GM12878 (cell line): ENCODE measurements at regions of chr11 and their contacts with region 1.

Region 1: GRCh38 chr11:46529095-46529905 is 64.5 kb downstream of the AMBRA1 start:
- DNase-seq: no peak
- ATAC-seq: peak; percentile 98
- H3K4me3 ChIP-seq: no peak overlapping the region
- H3K27ac ChIP-seq: 0 out of 2 replicates have a peak overlapping the region, but pooled peaks have one; percentile 4
- H3K4me1 ChIP-seq: no peaks in the 10 kb centered on the region; the same call in 1 of the 2 replicates
- H3K27me3 ChIP-seq: no peaks in the 10 kb centered on the region
- CTCF ChIP-seq: peak; percentile 88 to 94 (median 93); a peak in 5 of 6 replicates
- EP300 ChIP-seq: no peak
- POLR2A ChIP-seq: no peak
- RAD21 ChIP-seq: peak; percentile 70

Region 2: DNA sequence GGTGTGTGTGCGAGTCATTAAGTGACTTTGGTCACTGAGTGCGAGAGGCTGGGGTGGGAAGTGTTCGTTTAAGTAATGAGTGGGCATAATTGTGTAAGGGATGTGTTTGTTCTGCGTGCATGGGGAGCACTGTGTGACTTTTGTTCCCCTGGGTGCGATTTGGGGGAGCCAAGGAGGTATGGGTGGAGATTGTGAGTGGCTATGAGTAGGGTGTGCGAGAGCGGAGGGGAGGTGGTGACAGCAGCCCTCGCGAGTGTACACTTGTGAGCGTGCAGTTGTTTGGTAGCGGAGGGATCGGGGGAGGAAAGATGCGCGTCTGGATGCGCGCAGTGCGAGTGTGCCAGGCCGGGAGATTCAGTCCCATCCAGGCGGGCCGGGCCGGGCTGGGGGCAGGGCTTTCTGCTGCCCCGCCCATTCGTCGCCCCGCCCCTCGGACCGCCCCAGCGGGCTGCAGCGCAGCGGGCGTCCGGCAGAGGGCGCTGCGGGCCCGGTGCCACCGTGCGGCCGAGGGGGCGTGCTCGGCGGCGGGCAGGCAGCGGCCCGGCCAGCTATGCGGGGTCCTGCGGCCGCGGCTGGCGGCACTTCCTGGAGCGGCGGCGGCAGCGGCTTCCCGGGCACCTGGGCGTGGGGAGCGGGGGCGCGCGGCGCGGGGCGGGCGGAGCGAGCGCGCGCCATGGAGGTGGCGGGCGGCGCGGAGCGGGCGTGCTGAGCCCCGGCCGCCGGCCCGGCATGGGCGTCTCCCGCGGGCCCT is 182.2 kb before region 1 on chr11 and contains the start of gene DGKZ:
- CTCF ChIA-PET with region 1: interaction called, 15 read pairs
- POLR2A ChIA-PET with region 1: no interaction called
- RAD21 ChIA-PET with region 1: interaction called, 3 read pairs
- SMC1A ChIA-PET with region 1: no interaction called
- in situ Hi-C with region 1: no loop called
- intact Hi-C with region 1: no loop called
- DNase-seq: no peak
- ATAC-seq: peak; percentile 69
- H3K4me3 ChIP-seq: peak within 1 kb of the TSS; percentile 88
- H3K27ac ChIP-seq: peak within 1 kb of the TSS; percentile 71
- H3K4me1 ChIP-seq: peaks cover 39% of the 10 kb centered on the region
- H3K27me3 ChIP-seq: no peaks in the 10 kb centered on the region
- CTCF ChIP-seq: peak; percentile 63 to 92 (median 64); a peak in 4 of 6 replicates
- EP300 ChIP-seq: no peak
- POLR2A ChIP-seq: no peak; the same call in 1 of the 2 replicates
- RAD21 ChIP-seq: peak; percentile 64
- polyA plus RNA-seq, gene DGKZ: 0.50 to 1.6 TPM

Region 3: DNA sequence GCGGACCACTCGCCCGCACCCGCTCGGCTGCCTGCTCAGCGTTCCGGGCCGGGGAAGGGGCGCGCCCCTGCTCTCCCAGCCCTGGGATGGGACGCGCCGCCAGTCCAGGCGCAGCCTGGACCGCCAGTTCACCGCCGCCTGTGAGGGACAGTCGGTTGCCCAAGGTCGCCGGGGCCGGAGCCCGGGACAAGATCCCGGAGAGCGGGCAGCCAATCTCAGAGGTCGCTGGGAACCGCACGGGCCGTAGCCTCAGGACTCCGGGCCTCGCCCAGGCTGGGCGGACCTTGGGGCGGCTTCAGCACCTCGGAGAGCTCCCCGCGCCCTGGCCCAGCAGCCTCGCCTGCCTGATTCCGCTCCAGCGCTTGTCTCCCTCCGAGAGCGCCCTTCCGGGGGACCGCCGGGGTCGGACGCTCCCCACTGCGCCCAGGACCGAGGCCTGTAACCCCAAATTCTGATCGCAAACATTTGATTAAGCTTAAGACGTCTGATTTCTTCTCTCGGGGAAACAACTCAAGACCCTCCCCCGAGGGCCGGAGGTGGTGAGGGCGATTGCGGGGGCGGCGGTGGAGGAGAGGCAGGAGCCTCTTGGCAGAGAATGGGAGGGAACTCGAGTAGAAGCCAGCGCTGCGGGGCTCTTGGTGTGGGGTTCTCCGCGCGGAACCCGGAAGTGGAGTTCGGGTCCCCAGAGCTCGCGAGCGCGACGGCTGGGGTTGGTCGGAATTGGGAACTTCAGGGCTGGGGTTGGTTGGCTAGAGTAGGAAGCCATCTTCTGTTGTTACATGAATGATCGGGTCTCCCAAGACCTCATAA is 136.7 kb before region 1 on chr11:
- CTCF ChIA-PET with region 1: interaction called, 94 read pairs
- POLR2A ChIA-PET with region 1: interaction called, 3 read pairs
- RAD21 ChIA-PET with region 1: interaction called, 16 read pairs
- SMC1A ChIA-PET with region 1: interaction called, 21 read pairs
- in situ Hi-C with region 1: loop called (anchors 10 kb)
- intact Hi-C with region 1: loop called (anchors 1 kb)
- DNase-seq: no peak
- ATAC-seq: peak; percentile 85
- H3K4me3 ChIP-seq: peak overlapping the region; percentile 57; the same call in 1 of the 2 replicates
- H3K27ac ChIP-seq: no peak overlapping the region
- H3K4me1 ChIP-seq: peaks cover 6% of the 10 kb centered on the region
- H3K27me3 ChIP-seq: peaks cover 12 to 13% of the 10 kb centered on the region in 2 experiments
- CTCF ChIP-seq: no peak
- EP300 ChIP-seq: no peak
- POLR2A ChIP-seq: no peak
- RAD21 ChIP-seq: no peak

Region 4: GRCh38 chr11:46438211-46438610 is 91.1 kb before region 1 on chr11:
- CTCF ChIA-PET with region 1: interaction called, 13 read pairs
- POLR2A ChIA-PET with region 1: no interaction called
- RAD21 ChIA-PET with region 1: interaction called, 4 read pairs
- SMC1A ChIA-PET with region 1: interaction called, 9 read pairs
- in situ Hi-C with region 1: no loop called
- intact Hi-C with region 1: no loop called
- DNase-seq: no peak
- ATAC-seq: no peak
- H3K4me3 ChIP-seq: no peak overlapping the region
- H3K27ac ChIP-seq: no peak overlapping the region
- H3K4me1 ChIP-seq: peaks cover 4% of the 10 kb centered on the region; the same call in 1 of the 2 replicates
- H3K27me3 ChIP-seq: no peaks in the 10 kb centered on the region
- CTCF ChIP-seq: no peak
- EP300 ChIP-seq: no peak
- POLR2A ChIP-seq: no peak
- RAD21 ChIP-seq: no peak

Region 5: GRCh38 chr11:46475926-46476545 is 53.3 kb before region 1 on chr11:
- CTCF ChIA-PET with region 1: interaction called, 47 read pairs
- POLR2A ChIA-PET with region 1: interaction called, 5 read pairs
- RAD21 ChIA-PET with region 1: interaction called, 18 read pairs
- SMC1A ChIA-PET with region 1: interaction called, 52 read pairs
- in situ Hi-C with region 1: no loop called
- intact Hi-C with region 1: no loop called
- DNase-seq: peak; percentile 28
- ATAC-seq: peak; percentile 73
- H3K4me3 ChIP-seq: no peak overlapping the region
- H3K27ac ChIP-seq: no peak overlapping the region
- H3K4me1 ChIP-seq: peaks cover 15% of the 10 kb centered on the region
- H3K27me3 ChIP-seq: no peaks in the 10 kb centered on the region
- CTCF ChIP-seq: no peak
- EP300 ChIP-seq: no peak
- POLR2A ChIP-seq: no peak
- RAD21 ChIP-seq: no peak

Region 6: DNA sequence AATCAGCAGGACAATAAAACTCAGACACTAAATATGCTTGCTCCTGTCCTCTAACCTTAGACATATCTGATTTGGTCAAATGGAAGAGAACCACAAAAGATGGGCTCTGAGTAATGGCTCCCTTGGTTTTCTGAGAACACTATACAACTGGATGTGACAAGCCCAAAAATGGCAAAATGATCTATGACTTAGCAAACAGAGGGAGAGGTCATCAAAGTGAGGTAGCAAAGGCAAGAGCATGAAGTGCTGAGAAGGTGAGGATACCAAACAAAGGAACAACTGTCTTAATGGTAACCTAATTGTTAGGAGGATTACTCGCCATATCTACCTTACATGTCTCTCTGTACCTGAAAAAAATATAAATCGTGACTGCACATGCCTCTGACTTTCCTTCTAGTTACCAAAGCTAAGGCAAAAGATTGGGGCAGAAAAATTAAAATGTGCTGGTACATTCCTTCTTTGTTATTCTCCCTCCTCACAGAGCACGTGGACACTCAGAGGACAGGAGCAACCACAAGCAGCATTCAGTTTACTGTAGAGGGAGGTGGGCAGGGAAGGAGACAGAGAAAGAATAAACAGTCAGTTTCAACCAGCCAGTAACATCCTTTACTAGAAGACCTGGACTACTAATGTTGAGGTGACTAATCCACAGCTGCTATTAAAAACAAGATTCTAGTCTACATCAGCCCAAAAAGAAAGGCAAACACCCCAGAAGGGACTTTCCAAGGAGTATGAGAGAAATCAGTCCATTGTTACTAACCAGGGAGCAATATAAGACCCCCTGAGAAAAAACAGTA is 24.3 kb before region 1 on chr11:
- CTCF ChIA-PET with region 1: interaction called, 11 read pairs
- POLR2A ChIA-PET with region 1: no interaction called
- RAD21 ChIA-PET with region 1: interaction called, 5 read pairs
- SMC1A ChIA-PET with region 1: interaction called, 4 read pairs
- in situ Hi-C with region 1: no loop called
- intact Hi-C with region 1: no loop called
- DNase-seq: no peak
- ATAC-seq: peak; percentile 83
- H3K4me3 ChIP-seq: no peak overlapping the region
- H3K27ac ChIP-seq: peak overlapping the region; percentile 53
- H3K4me1 ChIP-seq: peaks cover 15% of the 10 kb centered on the region
- H3K27me3 ChIP-seq: no peaks in the 10 kb centered on the region
- CTCF ChIP-seq: no peak
- EP300 ChIP-seq: no peak
- POLR2A ChIP-seq: no peak
- RAD21 ChIP-seq: no peak

Region 7: GRCh38 chr11:46560300-46560991 is 31.1 kb after region 1 on chr11:
- CTCF ChIA-PET with region 1: interaction called, 12 read pairs
- POLR2A ChIA-PET with region 1: interaction called, 8 read pairs
- RAD21 ChIA-PET with region 1: interaction called, 5 read pairs
- SMC1A ChIA-PET with region 1: interaction called, 5 read pairs
- in situ Hi-C with region 1: no loop called
- intact Hi-C with region 1: no loop called
- DNase-seq: peak; percentile 33
- ATAC-seq: peak; percentile 86
- H3K4me3 ChIP-seq: peak overlapping the region; percentile 64
- H3K27ac ChIP-seq: peak overlapping the region; percentile 66
- H3K4me1 ChIP-seq: peaks cover 4% of the 10 kb centered on the region
- H3K27me3 ChIP-seq: no peaks in the 10 kb centered on the region
- CTCF ChIP-seq: no peak
- EP300 ChIP-seq: no peak
- POLR2A ChIP-seq: no peak
- RAD21 ChIP-seq: no peak

Region 8: GRCh38 chr11:46845740-46846509 is 316.6 kb after region 1 on chr11 and contains the start of gene CKAP5:
- CTCF ChIA-PET with region 1: no interaction called
- POLR2A ChIA-PET with region 1: no interaction called
- RAD21 ChIA-PET with region 1: no interaction called
- SMC1A ChIA-PET with region 1: no interaction called
- in situ Hi-C with region 1: no loop called
- intact Hi-C with region 1: no loop called
- DNase-seq: peak; percentile 56
- ATAC-seq: peak; percentile 98
- H3K4me3 ChIP-seq: peak within 1 kb of the TSS; percentile 97
- H3K27ac ChIP-seq: peak within 1 kb of the TSS; percentile 53
- H3K4me1 ChIP-seq: no peaks in the 10 kb centered on the region; the same call in 1 of the 2 replicates
- H3K27me3 ChIP-seq: no peaks in the 10 kb centered on the region
- CTCF ChIP-seq: no peak
- EP300 ChIP-seq: no peak
- POLR2A ChIP-seq: peak; percentile 90
- RAD21 ChIP-seq: no peak
- polyA plus RNA-seq, gene CKAP5: 20.1 to 37.5 TPM